ENCODE measurements at regions of chr9 and their contacts with region 1.

Region 1: GRCh38 chr9:137534256-137535117 is 15.7 kb downstream of the PNPLA7 start:
- DNase-seq: peak; percentile 69
- H3K4me3 Mint-ChIP-seq: no peak overlapping the region
- H3K27ac Mint-ChIP-seq: no peak overlapping the region
- H3K4me1 Mint-ChIP-seq: peaks cover 7% of the 10 kb centered on the region
- H3K27me3 Mint-ChIP-seq: no peaks in the 10 kb centered on the region
- CTCF ChIP-seq: peak; percentile 50

Region 2: DNA sequence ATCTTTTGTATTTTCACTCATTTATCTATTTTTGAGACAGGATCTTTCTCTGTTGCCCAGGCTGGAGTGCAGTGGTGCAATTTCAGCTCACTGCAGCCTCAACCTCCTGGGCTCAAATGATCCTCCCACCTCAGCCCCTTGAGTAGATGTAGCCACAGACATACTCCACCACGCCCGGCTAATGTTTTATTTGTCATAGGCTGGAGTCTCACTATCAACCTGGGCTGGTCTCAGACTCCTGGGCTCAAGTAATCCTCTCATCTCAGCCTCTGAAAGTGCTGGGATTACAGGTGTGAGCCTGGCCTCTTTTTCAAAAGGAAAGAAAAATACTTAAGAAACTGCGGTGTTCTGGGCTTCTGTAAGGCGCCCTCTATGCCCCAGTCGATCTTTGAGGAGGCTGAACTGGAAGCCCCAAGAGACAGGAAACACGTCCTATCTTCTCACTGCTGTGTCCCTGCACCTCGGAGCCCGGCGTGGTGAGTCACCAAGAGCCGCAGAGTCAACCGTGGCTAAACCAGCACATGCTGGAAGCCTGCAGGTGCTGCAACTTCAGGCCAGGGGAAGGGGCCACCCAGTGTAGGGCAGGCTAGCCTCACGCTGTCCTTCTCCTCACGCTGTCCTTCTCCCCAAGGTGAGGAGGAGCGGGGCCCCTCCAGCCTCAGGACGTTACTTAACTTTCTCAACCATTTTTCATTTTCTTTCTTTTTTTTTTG is 1314.3 kb before region 1 on chr9:
- CTCF ChIA-PET with region 1: no interaction called
- POLR2A ChIA-PET with region 1: no interaction called
- intact Hi-C with region 1: no loop called
- DNase-seq: peak; percentile 83
- H3K4me3 Mint-ChIP-seq: no peak overlapping the region
- H3K27ac Mint-ChIP-seq: peak overlapping the region; percentile 67
- H3K4me1 Mint-ChIP-seq: peaks cover 22% of the 10 kb centered on the region
- H3K27me3 Mint-ChIP-seq: no peaks in the 10 kb centered on the region
- CTCF ChIP-seq: no peak

Region 3: DNA sequence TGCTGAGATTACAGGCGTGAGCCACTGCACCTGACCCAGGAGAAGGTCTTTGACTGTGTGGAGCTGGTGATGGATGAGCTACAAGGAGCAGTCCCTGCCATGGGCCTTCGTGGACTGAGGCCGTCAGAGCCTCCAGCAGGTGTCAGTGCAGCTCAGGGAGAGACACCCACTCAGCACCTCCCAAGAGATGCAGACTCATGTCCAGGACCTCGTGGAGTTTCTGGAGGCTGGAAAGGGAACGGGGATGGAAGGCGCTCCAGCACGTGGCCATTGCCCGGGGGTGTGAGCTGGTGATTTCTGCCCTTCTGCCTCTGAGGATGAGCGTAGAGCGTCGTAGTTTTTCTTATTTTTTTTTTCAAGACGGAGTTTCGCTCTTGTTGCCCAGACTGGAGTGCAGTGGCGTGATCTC is 247.5 kb before region 1 on chr9:
- CTCF ChIA-PET with region 1: interaction called, 3 read pairs
- POLR2A ChIA-PET with region 1: no interaction called
- intact Hi-C with region 1: loop called (anchors 5 kb)
- DNase-seq: peak; percentile 77
- H3K4me3 Mint-ChIP-seq: no peak overlapping the region
- H3K27ac Mint-ChIP-seq: no peak overlapping the region
- H3K4me1 Mint-ChIP-seq: no peaks in the 10 kb centered on the region
- H3K27me3 Mint-ChIP-seq: no peaks in the 10 kb centered on the region
- CTCF ChIP-seq: peak; percentile 48

Region 4: DNA sequence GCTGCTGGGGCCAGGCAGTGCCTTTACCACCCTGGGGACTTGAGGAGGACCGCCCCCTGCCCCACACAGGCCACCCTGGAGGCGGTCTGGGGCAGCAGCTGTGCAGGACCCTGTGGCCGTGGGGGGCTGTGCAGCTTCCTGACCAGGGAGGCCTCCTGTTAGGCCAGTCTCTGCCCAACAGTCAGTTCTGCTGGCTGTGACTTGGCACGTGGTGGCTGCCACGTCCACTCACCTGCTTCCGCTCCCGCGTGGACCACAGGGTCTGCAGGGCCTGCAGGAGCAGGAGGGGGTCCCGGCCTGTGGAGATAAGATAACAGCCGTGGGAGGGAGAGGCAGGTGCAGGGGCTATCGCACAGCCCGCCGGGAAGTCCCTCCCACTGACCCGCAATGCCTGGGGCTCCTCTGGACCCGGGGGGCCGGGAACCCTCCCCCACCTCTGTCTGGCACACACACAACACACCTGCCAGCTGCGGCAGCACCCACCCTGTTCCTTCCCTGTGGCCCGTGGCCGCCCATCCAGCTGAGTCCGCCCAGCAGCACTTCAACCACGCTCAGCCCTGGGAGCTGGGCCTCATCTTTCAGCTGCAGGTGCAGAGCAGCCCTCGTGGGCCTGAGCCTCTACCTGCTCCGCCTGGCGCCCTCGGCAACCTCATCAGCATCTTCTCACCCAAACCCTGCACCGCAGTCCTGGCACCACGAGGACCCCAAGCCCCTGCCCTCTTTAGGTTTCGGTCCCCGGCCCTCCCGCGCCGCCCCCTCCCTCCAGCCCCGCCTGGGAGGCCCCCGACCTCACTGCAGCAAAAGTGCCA is 151.2 kb before region 1 on chr9:
- CTCF ChIA-PET with region 1: no interaction called
- POLR2A ChIA-PET with region 1: no interaction called
- intact Hi-C with region 1: no loop called
- DNase-seq: no peak
- H3K4me3 Mint-ChIP-seq: no peak overlapping the region
- H3K27ac Mint-ChIP-seq: no peak overlapping the region
- H3K4me1 Mint-ChIP-seq: no peaks in the 10 kb centered on the region
- H3K27me3 Mint-ChIP-seq: no peaks in the 10 kb centered on the region
- CTCF ChIP-seq: no peak

Region 5: DNA sequence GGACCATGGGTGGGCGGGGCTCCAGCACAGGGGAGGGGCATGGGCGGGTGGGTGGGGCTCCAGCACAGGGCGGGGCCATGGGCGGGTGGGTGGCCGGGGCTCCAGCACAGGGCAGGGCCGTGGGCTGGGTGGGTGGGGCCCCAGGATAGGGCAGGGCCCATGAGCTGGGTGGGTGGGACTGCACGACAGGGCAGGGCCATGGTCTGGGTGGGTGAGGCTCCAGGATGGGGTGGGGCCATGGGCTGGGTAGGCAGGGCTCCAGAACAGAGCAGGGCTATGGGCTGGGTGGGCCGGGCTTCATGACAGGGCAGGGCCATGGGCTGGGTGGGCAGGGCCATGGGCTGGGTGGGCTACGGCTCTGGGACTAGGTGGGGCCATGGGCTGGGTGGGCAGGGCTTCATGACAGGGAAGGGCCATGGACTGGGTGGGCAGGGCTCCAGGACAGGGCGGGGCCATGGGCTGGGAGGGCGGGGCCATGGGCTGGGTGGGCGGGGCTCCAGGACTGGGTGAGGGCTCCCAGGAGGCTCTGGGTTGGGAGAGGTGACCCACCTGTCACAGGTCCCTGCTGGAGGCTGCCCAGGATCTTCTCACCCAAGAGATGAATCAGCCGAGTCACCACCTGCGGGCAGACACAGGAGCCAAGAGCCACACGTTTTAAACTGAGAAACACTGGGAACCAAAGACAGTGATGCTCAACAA is 41.9 kb before region 1 on chr9:
- CTCF ChIA-PET with region 1: no interaction called
- POLR2A ChIA-PET with region 1: no interaction called
- intact Hi-C with region 1: no loop called
- DNase-seq: peak; percentile 15
- H3K4me3 Mint-ChIP-seq: no peak overlapping the region
- H3K27ac Mint-ChIP-seq: no peak overlapping the region
- H3K4me1 Mint-ChIP-seq: peaks cover 9% of the 10 kb centered on the region
- H3K27me3 Mint-ChIP-seq: no peaks in the 10 kb centered on the region
- CTCF ChIP-seq: no peak

Region 6: DNA sequence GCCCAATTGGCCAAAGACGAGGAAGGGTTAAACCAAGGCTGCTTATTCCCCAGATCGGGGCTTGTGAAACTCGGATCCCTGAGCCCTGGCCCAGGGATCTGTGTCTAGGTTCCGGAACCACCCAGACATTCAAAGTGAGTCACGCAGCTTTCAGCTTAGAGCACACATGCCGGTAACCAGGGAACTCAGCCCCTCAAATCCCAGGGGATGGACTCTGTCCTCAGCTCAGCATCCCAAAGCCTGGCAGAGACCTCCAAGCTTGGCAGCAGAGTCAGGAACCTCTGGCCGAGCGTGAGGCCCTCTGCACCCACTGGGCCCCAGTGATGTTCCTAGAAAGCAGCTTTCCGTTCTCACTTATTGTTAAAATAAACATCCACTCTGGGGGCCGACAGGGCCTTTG is 10.6 kb after region 1 on chr9:
- CTCF ChIA-PET with region 1: interaction called, 13 read pairs
- POLR2A ChIA-PET with region 1: interaction called, 8 read pairs
- intact Hi-C with region 1: no loop called
- DNase-seq: no peak
- H3K4me3 Mint-ChIP-seq: no peak overlapping the region
- H3K27ac Mint-ChIP-seq: no peak overlapping the region
- H3K4me1 Mint-ChIP-seq: peaks cover 5% of the 10 kb centered on the region
- H3K27me3 Mint-ChIP-seq: no peaks in the 10 kb centered on the region
- CTCF ChIP-seq: no peak

Region 7: GRCh38 chr9:137639303-137640051 is 105.0 kb after region 1 on chr9:
- CTCF ChIA-PET with region 1: no interaction called
- POLR2A ChIA-PET with region 1: no interaction called
- intact Hi-C with region 1: no loop called
- DNase-seq: no peak
- H3K4me3 Mint-ChIP-seq: peak overlapping the region; percentile 40
- H3K27ac Mint-ChIP-seq: peak overlapping the region; percentile 31
- H3K4me1 Mint-ChIP-seq: peaks cover 8% of the 10 kb centered on the region
- H3K27me3 Mint-ChIP-seq: no peaks in the 10 kb centered on the region
- CTCF ChIP-seq: no peak

Measured in MCF 10A (cell line).